ENCODE measurements at regions of chr7 and their contacts with region 1.

Region 1: DNA sequence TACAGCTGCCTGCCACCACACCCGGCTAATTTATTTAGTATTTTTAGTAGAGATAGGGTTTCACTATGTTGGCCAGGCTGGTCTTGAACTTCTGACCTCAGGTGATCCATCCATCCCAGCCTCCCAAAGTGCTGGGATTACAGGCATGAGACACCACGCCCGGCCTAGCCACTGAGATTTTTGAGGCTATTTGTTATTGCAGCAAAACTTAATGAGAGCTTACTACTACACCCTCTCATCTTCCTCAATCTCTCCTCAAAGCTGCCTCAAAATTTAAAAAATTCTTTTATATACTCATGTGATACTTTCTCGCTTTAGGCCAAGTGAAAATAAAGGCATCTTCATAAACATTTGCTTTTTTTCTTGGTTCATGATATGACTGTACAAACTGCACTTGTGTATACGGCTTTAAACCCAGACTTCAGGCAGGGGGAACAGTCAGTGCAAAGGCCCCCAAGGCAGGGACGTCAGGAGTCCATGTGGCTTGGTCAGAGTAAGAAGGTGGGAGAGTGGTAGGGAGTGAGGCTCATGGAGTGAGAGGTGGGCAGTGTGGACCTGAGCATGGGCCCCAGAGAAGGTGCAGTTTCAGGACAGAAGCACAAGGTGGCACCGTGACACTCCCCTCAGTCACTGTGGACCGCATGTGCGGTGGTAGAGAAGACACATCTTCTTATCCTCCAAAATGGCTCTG is 55.5 kb downstream of the SYPL1 start:
- DNase-seq: peak; percentile 54 to 87
- ATAC-seq: peak; percentile 92 to 99 (median 99)
- H3K4me3 ChIP-seq: no peak overlapping the region
- H3K4me3 Mint-ChIP-seq: no peak overlapping the region
- H3K27ac ChIP-seq: no peak overlapping the region
- H3K27ac Mint-ChIP-seq: no peak overlapping the region
- H3K4me1 ChIP-seq: peaks cover 27% of the 10 kb centered on the region
- H3K4me1 Mint-ChIP-seq: peaks cover 5 to 13% of the 10 kb centered on the region in 2 donors
- H3K27me3 ChIP-seq: no peaks in the 10 kb centered on the region
- H3K27me3 Mint-ChIP-seq: peaks cover 0 to 9% of the 10 kb centered on the region in 2 donors
- CTCF ChIP-seq: peak; percentile 81

Region 2: DNA sequence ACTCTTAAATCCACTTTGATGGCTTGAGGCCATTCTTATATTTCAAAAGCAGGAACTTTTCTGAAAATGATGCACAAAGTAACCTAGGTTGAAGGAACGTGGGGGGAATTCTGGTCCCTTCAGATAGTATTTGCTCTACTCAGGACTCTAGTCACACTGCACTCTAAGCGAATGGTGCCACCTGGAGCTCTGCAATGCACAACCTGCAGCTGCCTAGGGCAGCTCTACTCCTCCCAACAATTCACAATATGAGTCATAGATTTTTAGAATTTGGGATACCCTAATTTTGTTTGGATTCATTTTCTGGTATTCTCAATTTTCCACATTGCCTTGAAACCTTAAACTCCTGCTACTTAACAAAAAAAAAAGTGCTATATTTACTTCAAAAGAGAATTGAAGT is 38.1 kb after region 1 on chr7:
- intact Hi-C with region 1: no loop called
- DNase-seq: no peak
- ATAC-seq: no peak
- H3K4me3 ChIP-seq: no peak overlapping the region
- H3K4me3 Mint-ChIP-seq: no peak overlapping the region
- H3K27ac ChIP-seq: no peak overlapping the region
- H3K27ac Mint-ChIP-seq: no peak overlapping the region
- H3K4me1 ChIP-seq: no peaks in the 10 kb centered on the region
- H3K4me1 Mint-ChIP-seq: peaks cover 4 to 9% of the 10 kb centered on the region in 2 donors
- H3K27me3 ChIP-seq: no peaks in the 10 kb centered on the region
- H3K27me3 Mint-ChIP-seq: no peaks in the 10 kb centered on the region
- CTCF ChIP-seq: no peak

Region 3: DNA sequence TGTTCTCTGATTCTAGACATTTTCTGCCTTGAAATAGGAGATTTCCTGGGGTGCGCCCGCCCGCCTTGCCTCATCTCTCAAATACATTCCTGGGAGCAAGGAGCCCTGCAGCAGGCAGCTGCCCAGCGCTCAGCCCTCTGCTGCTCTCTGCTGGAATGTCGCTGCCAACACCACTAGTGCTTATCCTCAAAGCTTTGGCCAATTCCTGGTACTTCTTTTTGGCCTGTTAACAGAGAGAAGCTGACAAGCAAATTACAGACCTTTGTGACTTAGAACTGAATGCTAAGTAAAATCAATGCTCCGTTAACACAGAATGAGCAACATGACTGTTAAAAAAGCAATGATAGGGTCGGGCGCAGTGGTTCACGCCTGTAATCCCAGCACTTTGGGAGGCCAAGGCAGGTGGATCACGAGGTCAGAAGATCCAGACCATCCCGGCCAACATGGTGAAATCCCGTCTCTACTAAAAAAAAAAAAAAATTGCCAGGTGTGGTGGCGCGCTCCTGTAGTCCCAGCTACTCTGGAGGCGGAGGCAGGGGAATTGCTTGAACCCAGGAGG is 97.3 kb after region 1 on chr7:
- intact Hi-C with region 1: loop called (anchors 1 kb)
- DNase-seq: peak; percentile 63 to 85
- ATAC-seq: peak; percentile 84 to 99 (median 98)
- H3K4me3 ChIP-seq: no peak overlapping the region
- H3K4me3 Mint-ChIP-seq: no peak overlapping the region
- H3K27ac ChIP-seq: no peak overlapping the region
- H3K27ac Mint-ChIP-seq: no peak overlapping the region
- H3K4me1 ChIP-seq: peaks cover 9% of the 10 kb centered on the region
- H3K4me1 Mint-ChIP-seq: peaks cover 0 to 8% of the 10 kb centered on the region in 2 donors
- H3K27me3 ChIP-seq: peaks cover 6% of the 10 kb centered on the region
- H3K27me3 Mint-ChIP-seq: peaks cover 29 to 53% of the 10 kb centered on the region in 2 donors
- CTCF ChIP-seq: peak; percentile 92

Measured in natural killer cell (primary cell).